ENCODE measurements at regions of chr14 and their contacts with region 1.

Region 1: DNA sequence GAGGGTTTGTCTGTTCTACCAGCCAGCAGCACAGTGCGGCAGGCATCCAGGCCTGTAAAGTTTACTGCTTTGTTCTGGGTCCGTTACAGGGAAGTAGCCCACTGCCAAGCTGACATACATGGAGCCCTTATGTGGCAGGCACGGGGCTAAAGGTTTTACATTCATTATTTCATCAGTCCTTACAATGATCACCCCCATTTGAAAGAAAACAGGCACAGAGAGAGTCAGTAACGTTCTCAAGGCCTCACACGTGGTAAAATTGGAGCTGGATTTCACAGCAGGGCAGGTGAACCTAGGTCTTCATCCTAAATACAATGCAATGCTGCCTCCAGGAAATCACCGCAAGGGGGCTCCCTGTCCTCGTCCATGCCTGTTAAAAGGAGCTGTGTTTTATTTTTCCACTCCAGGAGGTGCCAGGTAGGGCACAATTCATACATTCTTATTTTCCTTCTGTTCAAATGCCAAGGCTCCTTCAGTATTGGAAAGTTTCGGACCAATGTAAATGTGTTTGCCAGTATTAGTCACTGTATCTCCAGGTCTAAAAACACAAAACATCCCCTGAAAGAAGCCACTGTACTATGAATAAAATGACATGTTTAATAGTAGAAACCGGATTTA is 172.2 kb upstream of the GZMB start:
- DNase-seq: peak; percentile 34
- H3K4me3 ChIP-seq: no peak overlapping the region
- H3K27ac ChIP-seq: no peak overlapping the region
- H3K4me1 ChIP-seq: no peaks in the 10 kb centered on the region
- H3K27me3 ChIP-seq: peaks cover 38% of the 10 kb centered on the region
- CTCF ChIP-seq: peak; percentile 87
- EP300 ChIP-seq: no peak
- RAD21 ChIP-seq: peak; percentile 69

Region 2: DNA sequence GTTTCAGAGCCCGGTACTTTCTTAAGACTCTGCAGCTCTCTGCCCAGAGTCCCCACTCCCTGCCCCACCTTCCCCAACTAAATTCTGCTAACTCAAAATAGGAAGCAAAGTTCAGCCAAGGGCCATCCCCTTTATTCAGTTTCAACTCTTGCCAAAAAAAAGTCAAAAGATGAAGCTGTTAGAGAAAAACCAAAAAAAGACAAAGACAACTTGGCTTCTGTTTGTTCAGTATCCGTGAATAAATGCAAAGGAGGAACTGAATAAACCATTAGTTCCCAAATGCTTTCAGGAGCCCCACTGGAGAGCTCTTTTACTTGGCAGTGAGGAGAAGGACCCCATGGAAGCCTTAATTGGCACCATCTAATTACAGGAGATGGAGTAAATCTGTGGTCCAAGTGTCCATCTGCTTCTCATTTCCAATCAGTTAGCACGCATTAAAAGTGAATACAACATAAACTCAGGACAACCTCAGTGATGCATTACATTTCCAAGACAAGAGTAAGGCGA is 16.7 kb before region 1 on chr14:
- CTCF ChIA-PET with region 1: interaction called, 23 read pairs
- POLR2A ChIA-PET with region 1: no interaction called
- DNase-seq: no peak
- H3K4me3 ChIP-seq: no peak overlapping the region
- H3K27ac ChIP-seq: no peak overlapping the region
- H3K4me1 ChIP-seq: no peaks in the 10 kb centered on the region
- H3K27me3 ChIP-seq: no peaks in the 10 kb centered on the region
- CTCF ChIP-seq: no peak
- EP300 ChIP-seq: no peak
- RAD21 ChIP-seq: no peak

Region 3: DNA sequence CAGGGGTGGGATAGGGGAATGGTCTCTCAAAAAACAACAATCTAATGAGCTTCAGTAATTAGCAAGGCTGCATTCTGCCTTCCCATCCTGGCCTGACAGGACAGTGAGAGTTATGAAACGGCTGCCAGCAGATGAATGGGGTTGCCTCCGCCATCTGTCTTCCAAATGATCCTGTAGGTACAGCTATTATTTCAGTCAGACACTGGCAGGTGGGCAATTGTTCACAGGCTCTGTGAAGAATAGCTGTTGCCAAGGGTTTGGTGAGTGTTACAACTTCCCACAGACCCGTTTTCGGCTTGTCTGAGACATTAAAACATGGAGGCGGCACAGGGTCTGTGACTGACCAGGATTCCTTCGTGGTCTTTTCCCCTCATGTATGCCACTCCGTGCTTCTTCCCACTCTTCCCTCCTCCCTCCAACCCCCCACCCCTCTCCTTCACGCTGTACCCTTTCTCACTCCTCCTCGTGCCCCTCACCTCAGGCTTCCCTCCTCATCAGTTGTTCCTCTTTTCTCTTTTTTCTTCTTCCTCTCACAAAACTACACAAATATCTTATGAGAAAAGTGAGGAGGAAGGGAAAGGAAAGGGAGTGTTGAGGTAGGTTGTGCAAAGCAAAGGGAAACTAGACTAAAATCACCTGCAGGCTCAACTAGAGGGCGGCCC is 11.4 kb before region 1 on chr14:
- CTCF ChIA-PET with region 1: interaction called, 23 read pairs
- POLR2A ChIA-PET with region 1: no interaction called
- DNase-seq: no peak
- H3K4me3 ChIP-seq: no peak overlapping the region
- H3K27ac ChIP-seq: no peak overlapping the region
- H3K4me1 ChIP-seq: no peaks in the 10 kb centered on the region
- H3K27me3 ChIP-seq: peaks cover 5% of the 10 kb centered on the region; the same call in 1 of the 2 replicates
- CTCF ChIP-seq: no peak
- EP300 ChIP-seq: no peak
- RAD21 ChIP-seq: no peak

Region 4: DNA sequence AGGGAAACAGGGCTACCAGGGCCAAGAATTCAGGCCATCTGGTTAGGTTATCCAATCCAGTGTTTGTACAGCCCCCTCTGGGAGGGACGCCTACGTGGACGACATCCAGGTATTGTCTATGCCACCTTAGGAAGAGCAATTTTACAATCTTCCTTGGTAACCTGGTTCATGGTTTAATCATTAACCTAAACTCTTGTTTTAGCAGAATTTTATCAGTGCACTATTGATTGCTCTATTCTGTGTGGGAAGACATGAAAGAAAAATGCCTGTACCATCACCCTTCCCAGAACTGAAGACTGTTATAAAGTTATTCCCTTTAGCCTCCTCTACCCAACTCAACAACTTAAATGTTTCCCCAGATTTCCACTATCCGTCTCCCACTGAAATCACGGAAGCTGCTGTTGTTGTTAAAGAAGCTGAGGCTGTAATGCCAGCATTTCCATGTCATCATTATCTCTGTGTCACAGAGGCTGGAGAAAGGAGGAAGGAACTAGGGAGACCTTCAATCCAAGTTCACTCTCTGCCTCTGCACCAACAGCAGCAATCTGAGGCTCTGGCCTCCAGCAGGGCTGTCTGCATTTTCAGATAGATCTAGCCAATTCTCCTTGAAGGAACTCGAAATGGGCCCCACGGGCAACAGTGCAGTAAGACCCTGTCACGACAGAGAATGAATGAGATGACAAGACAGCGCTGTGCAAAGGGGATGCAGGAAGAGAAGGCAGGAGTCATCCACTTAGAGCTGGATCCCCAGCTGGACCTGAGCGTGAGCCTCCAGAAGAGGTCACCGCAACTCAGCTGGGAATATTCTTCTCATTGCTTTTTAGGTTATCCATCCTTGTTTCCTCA is 11.3 kb after region 1 on chr14:
- CTCF ChIA-PET with region 1: interaction called, 25 read pairs
- POLR2A ChIA-PET with region 1: no interaction called
- DNase-seq: no peak
- H3K4me3 ChIP-seq: no peak overlapping the region
- H3K27ac ChIP-seq: no peak overlapping the region
- H3K4me1 ChIP-seq: no peaks in the 10 kb centered on the region
- H3K27me3 ChIP-seq: peaks cover 7% of the 10 kb centered on the region; the same call in 1 of the 2 replicates
- CTCF ChIP-seq: no peak
- EP300 ChIP-seq: no peak
- RAD21 ChIP-seq: no peak

Region 5: GRCh38 chr14:24826390-24826789 is 20.2 kb after region 1 on chr14:
- CTCF ChIA-PET with region 1: interaction called, 14 read pairs
- POLR2A ChIA-PET with region 1: no interaction called
- DNase-seq: no peak
- H3K4me3 ChIP-seq: no peak overlapping the region
- H3K27ac ChIP-seq: no peak overlapping the region
- H3K4me1 ChIP-seq: no peaks in the 10 kb centered on the region
- H3K27me3 ChIP-seq: no peaks in the 10 kb centered on the region
- CTCF ChIP-seq: no peak
- EP300 ChIP-seq: no peak
- RAD21 ChIP-seq: no peak

Region 6: DNA sequence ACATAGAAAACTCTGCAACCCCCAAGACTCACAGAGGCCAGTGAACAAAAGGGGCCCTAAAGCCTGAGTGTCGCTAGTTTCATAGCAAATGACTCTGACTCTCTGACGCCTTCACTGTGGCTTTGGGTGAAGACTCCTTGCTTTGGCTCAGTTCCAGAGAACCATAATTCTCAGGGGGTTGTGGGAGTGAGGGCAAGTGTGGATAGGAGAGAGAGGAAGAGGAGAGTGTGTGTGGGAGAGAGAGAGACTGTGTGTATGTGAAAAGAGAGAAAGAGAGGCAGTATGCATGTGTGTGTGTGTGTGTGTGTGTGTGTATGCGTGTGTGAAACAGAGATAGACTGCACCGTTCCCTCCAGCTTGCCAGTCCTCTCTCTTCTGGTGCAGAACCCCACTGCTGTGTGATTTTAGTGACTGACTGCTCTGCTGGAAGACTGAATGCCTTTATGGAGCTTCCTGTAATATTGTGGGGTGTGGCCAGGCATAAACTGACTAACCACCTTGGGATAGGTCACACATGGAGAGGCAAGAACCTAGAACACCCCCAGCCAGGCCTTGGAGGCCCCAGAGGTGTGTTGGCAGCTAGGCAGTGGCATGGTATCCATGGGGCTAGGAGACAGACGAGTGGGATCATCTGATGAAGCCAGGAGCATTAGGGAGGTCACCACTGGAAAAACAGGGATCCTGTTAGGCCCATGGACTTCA is 289.7 kb after region 1 on chr14:
- CTCF ChIA-PET with region 1: no interaction called
- POLR2A ChIA-PET with region 1: no interaction called
- DNase-seq: no peak
- H3K4me3 ChIP-seq: no peak overlapping the region
- H3K27ac ChIP-seq: no peak overlapping the region
- H3K4me1 ChIP-seq: no peaks in the 10 kb centered on the region
- H3K27me3 ChIP-seq: no peaks in the 10 kb centered on the region; the same call in 1 of the 2 replicates
- CTCF ChIP-seq: no peak
- EP300 ChIP-seq: no peak
- RAD21 ChIP-seq: no peak

Region 7: GRCh38 chr14:25132732-25133422 is 326.7 kb after region 1 on chr14:
- CTCF ChIA-PET with region 1: interaction called, 25 read pairs
- POLR2A ChIA-PET with region 1: no interaction called
- DNase-seq: peak; percentile 61
- H3K4me3 ChIP-seq: peak overlapping the region in 1 of 2 experiments; percentile 18; a peak in 1 of 4 replicates
- H3K27ac ChIP-seq: no peak overlapping the region
- H3K4me1 ChIP-seq: no peaks in the 10 kb centered on the region
- H3K27me3 ChIP-seq: peaks cover 20% of the 10 kb centered on the region; the same call in 1 of the 2 replicates
- CTCF ChIP-seq: peak; percentile 78
- EP300 ChIP-seq: no peak
- RAD21 ChIP-seq: peak; percentile 55

Region 8: GRCh38 chr14:25150934-25151790 is 345.0 kb after region 1 on chr14:
- CTCF ChIA-PET with region 1: interaction called, 12 read pairs
- POLR2A ChIA-PET with region 1: no interaction called
- DNase-seq: peak; percentile 33
- H3K4me3 ChIP-seq: no peak overlapping the region; a peak in 1 of 4 replicates
- H3K27ac ChIP-seq: no peak overlapping the region
- H3K4me1 ChIP-seq: no peaks in the 10 kb centered on the region
- H3K27me3 ChIP-seq: 0 out of 2 replicates have a peak, but pooled peaks cover 5% of the 10 kb centered on the region
- CTCF ChIP-seq: peak; percentile 88
- EP300 ChIP-seq: no peak
- RAD21 ChIP-seq: peak; percentile 56

Measured in SK-N-SH (cell line).